ENCODE measurements at regions of chr1 and their contacts with region 1.

Region 1: DNA sequence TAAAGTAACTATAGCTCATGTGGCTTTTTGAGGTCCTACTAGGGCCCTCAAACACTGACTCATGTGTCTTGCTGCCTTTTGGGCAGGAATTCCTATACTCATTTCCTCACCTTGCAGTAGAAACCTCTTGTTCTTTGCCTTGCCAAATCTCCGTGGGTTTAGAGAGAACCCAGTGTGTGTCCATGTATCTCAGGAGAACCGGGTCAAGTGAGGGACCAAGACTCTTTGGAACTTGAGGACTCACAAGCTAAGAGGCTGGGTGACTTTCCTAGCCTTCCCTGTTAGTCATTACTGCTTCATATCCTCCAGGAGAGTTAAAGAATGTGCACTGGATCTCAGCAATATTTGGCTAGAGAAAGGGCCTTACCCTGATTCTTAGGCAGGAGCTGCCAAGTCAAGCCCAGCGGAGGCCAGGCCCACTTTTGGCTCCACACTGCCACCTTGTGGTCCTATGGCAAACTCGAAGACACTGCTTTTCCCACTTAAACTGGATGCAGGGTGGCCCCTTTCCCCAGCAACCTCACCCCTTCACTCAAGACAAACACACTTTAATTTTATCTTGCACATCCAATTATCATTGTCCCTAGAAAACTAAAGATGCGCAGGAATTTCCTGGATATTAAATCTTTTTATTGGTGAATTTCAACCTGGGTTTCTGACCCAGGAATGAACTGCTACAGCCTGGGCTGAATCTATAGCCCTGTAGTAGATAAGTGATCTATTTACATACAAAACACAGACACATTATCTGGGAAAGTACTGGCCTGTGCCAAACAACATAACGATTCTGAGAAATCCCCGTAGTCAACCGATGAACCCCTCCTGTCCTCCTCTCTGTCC is 10.6 kb downstream of the AVPR1B start:
- DNase-seq: peak; percentile 87 to 90 (median 88)
- ATAC-seq: peak; percentile 94
- H3K4me3 ChIP-seq: no peak overlapping the region
- H3K27ac ChIP-seq: no peak overlapping the region
- H3K4me1 ChIP-seq: peaks cover 4 to 7% of the 10 kb centered on the region in 2 experiments; a peak in 2 of 5 replicates
- H3K27me3 ChIP-seq: peaks cover 8 to 24% of the 10 kb centered on the region in 2 experiments; a peak in 4 of 5 replicates
- CTCF ChIP-seq: peak; percentile 93 to 97 (median 96)
- EP300 ChIP-seq: no peak
- POLR2A ChIP-seq: no peak
- RAD21 ChIP-seq: peak; percentile 98 to 99

Region 2: DNA sequence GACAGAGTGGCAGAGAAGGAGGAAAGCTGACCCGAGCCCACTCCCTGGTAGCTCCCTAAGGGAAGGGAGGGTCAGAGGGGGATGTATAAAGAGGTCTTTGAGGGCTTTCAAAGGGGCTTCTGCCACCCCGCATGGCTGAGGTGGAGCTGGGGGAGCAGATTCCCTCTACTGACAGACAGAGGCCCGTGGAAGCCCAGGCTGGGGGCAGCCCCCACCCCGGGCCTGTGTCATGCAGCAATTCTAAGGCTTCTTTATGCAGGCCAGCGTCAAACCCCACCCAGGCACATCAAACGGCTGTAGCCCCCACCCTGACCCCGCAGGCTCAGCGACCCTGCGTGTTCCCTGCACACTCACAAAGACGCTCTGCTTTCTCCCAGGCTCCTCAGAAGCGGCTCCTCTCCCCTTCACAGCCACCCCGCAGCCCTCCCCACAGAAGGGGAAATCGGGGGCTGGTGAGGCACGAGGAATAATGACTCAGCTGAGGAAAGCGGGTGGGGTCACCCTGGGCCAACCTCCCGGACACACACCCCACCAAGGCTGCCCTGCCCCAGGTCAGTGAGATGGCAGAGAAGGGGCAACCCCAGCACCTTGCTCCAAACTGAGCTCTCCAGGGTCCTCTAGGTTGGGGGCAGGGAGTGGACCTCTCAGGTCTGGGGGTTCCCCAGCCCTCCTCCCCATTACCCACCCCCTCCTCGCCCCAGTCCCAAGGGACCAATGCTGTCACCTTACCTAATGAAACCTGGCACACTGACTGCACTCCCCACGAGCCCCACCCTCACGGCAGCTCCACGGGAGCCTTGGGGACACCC is 437.0 kb before region 1 on chr1:
- CTCF ChIA-PET with region 1: no interaction called
- POLR2A ChIA-PET with region 1: no interaction called
- in situ Hi-C with region 1: no loop called
- intact Hi-C with region 1: loop called (anchors 10 kb)
- DNase-seq: peak in 3 of 4 experiments; percentile 48 to 86 (median 83)
- ATAC-seq: peak; percentile 16; the same call in 2 of the 3 replicates
- H3K4me3 ChIP-seq: no peak overlapping the region
- H3K27ac ChIP-seq: no peak overlapping the region
- H3K4me1 ChIP-seq: peaks cover 9 to 17% of the 10 kb centered on the region in 2 experiments; a peak in 4 of 5 replicates
- H3K27me3 ChIP-seq: peaks cover 0 to 9% of the 10 kb centered on the region in 2 experiments; a peak in 1 of 5 replicates
- CTCF ChIP-seq: no peak
- EP300 ChIP-seq: no peak
- POLR2A ChIP-seq: no peak
- RAD21 ChIP-seq: no peak

Region 3: DNA sequence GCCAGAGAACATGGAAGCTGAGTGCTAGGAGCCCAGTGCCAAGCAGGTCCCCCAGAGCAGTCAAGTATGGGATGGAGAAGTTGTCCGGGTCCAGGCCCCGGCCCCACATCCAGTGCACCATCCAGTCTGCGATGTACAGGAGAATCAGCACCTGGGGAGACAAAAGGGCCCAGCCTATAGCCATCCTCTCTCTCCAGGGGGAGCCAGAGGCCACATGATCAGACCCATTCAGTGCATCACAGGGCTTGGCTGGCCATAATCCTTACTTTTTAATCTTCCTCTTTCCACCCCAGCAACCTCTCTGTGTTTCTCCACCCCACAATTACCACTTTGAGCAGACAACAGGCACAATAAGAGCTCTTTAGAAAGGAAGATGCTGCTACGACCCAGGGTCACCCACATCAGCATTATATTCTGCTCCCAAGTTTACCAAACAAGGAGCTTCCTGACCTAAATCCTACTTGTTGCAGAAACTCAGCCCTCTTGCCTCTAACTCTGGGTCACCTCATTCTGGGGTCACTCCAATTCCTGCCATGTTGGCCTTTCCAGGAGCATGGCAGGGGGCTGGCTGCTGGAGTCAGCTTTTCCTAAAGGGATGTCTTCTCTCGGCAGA is 314.9 kb before region 1 on chr1:
- CTCF ChIA-PET with region 1: interaction called, 5 read pairs
- POLR2A ChIA-PET with region 1: no interaction called
- in situ Hi-C with region 1: loop called (anchors 5 kb)
- intact Hi-C with region 1: loop called (anchors 1 kb)
- DNase-seq: peak; percentile 72 to 86 (median 78)
- ATAC-seq: peak; percentile 97
- H3K4me3 ChIP-seq: no peak overlapping the region
- H3K27ac ChIP-seq: no peak overlapping the region
- H3K4me1 ChIP-seq: peaks cover 7 to 15% of the 10 kb centered on the region in 2 experiments; a peak in 4 of 5 replicates
- H3K27me3 ChIP-seq: no peaks in the 10 kb centered on the region
- CTCF ChIP-seq: peak; percentile 92 to 98 (median 97)
- EP300 ChIP-seq: no peak
- POLR2A ChIP-seq: no peak
- RAD21 ChIP-seq: peak; percentile 95 to 97

Region 4: GRCh38 chr1:205919026-205919746 is 187.4 kb before region 1 on chr1:
- CTCF ChIA-PET with region 1: interaction called, 9 read pairs
- POLR2A ChIA-PET with region 1: no interaction called
- in situ Hi-C with region 1: loop called (anchors 10 kb)
- intact Hi-C with region 1: loop called (anchors 1 kb)
- DNase-seq: peak; percentile 80 to 87 (median 84)
- ATAC-seq: peak; percentile 95
- H3K4me3 ChIP-seq: no peak overlapping the region
- H3K27ac ChIP-seq: no peak overlapping the region
- H3K4me1 ChIP-seq: no peaks in the 10 kb centered on the region
- H3K27me3 ChIP-seq: peaks cover 30 to 75% of the 10 kb centered on the region in 2 experiments
- CTCF ChIP-seq: peak; percentile 90 to 97 (median 94)
- EP300 ChIP-seq: no peak
- POLR2A ChIP-seq: no peak
- RAD21 ChIP-seq: peak; percentile 96 to 99

Region 5: DNA sequence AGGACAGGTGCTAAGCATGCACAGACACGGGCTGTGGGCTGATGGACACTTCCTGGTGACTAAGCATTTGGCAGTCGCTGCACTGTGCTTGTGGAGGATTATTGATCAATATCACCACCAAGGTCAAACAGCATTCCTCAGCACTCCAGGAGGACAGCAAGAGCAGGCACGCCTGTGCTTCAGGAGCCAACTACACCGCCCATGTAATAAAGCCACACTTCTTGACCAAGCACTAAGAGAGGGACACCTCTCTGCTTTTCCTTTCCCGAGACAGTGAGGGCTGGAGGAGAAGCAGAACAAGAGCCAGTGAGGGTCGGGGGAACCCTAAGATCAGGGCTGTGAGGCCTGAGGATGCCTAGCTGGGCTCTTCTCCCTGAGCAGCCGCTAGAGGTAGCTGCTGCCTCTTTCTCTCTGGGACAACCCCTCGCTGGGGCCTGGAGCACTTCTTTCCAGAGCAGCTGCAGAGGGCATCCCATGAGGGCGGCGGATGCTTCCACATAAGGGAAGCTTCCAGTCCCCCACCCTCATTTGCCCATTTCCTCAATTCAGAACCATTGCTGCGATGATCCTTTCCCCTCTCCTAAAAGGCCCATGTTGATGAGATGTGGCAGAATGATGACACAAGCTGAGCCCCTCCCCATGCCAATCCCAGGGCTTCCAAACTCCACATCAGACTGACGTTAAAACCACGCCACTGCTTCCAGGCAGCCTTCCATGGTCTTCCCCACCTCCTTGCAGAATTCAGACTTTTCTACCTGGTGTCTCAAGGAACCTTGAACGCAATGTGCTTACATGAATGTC is 122.4 kb before region 1 on chr1:
- CTCF ChIA-PET with region 1: interaction called, 39 read pairs
- POLR2A ChIA-PET with region 1: interaction called, 5 read pairs
- in situ Hi-C with region 1: loop called (anchors 5 kb)
- intact Hi-C with region 1: loop called (anchors 1 kb)
- DNase-seq: peak; percentile 62 to 72 (median 70)
- ATAC-seq: peak; percentile 97
- H3K4me3 ChIP-seq: no peak overlapping the region
- H3K27ac ChIP-seq: no peak overlapping the region
- H3K4me1 ChIP-seq: no peaks in the 10 kb centered on the region; a peak in 1 of 5 replicates
- H3K27me3 ChIP-seq: peaks cover 8 to 44% of the 10 kb centered on the region in 2 experiments; a peak in 4 of 5 replicates
- CTCF ChIP-seq: peak; percentile 87 to 93 (median 91)
- EP300 ChIP-seq: no peak
- POLR2A ChIP-seq: no peak
- RAD21 ChIP-seq: peak; percentile 85 to 88

Region 6: DNA sequence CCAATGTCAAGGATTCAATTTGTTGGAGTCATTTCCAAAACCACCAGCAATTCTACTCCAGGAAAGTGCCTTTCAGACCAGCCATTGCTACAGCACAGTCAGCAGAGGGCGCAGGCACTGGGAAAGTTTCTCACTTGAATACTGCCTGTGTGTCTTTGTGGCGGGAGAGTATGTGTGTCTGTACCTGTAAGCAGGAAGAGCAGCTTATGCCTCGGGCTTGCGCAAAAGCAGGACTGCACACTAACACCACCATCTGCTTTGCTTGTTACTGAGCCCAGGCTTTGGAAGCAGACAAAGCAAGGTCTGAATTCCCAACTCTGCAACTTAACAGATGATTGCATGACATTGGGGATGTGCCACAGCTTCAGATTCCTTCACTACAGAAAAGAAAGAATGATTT is 75.8 kb before region 1 on chr1:
- CTCF ChIA-PET with region 1: interaction called, 30 read pairs
- POLR2A ChIA-PET with region 1: interaction called, 3 read pairs
- in situ Hi-C with region 1: no loop called
- intact Hi-C with region 1: loop called (anchors 1 kb)
- DNase-seq: peak; percentile 36 to 77 (median 48)
- ATAC-seq: peak; percentile 99
- H3K4me3 ChIP-seq: no peak overlapping the region
- H3K27ac ChIP-seq: no peak overlapping the region
- H3K4me1 ChIP-seq: no peaks in the 10 kb centered on the region
- H3K27me3 ChIP-seq: peaks cover 20 to 39% of the 10 kb centered on the region in 2 experiments
- CTCF ChIP-seq: peak; percentile 89 to 95 (median 93)
- EP300 ChIP-seq: no peak
- POLR2A ChIP-seq: no peak
- RAD21 ChIP-seq: peak; percentile 89 to 94

Region 7: DNA sequence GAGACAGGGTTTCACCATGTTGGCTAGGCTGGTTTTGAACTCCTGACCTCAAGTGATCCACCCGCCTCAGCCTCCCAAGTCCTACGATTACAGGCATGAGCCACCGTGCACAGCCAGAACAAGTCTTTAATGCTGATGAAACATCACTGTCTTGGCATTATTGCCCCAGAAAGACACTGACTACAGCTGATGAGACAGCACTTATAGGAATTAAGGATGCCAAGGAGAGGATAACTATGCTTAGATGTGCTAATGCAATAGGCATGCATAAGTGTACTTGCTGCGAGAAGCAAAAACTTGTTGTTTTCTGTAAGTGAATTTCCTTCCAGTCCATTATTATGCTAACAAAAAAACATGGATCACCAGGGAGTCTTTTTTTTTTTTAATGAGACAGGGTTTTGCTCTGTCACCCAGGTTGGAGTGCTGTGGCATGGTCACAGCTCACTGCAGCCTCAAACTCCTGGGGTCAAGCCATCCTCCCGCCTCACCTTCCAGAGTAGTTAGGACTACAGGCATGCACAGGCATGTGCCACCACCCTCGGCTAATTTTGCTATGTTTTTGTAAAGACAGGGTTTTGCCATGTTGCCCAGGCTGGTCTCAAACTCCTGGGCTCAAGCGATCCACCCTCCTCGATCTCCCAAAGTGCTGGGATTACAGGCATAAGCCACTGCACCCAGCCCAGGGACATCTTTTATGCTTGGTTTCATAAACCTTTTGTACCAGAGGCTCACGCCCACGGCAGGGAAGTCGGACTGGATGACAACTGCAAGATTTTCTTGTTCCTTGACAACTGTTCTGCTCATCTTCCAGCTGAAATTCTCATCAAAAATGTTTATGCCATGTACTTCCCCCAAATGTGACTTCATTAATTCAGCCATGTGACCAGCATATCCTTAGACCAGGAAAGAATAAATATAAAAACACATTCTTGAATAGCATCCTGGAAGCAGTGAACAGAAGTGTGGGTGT is 30.5 kb before region 1 on chr1:
- CTCF ChIA-PET with region 1: no interaction called
- POLR2A ChIA-PET with region 1: interaction called, 4 read pairs
- in situ Hi-C with region 1: no loop called
- intact Hi-C with region 1: loop called (anchors 1 kb)
- DNase-seq: no peak
- ATAC-seq: no peak
- H3K4me3 ChIP-seq: no peak overlapping the region
- H3K27ac ChIP-seq: no peak overlapping the region
- H3K4me1 ChIP-seq: peaks cover 0 to 8% of the 10 kb centered on the region in 2 experiments; a peak in 2 of 5 replicates
- H3K27me3 ChIP-seq: peaks cover 20 to 46% of the 10 kb centered on the region in 2 experiments
- CTCF ChIP-seq: no peak
- EP300 ChIP-seq: no peak
- POLR2A ChIP-seq: no peak
- RAD21 ChIP-seq: no peak